Spleen (tissue), 13 donors: ENCODE measurements at regions of chr1 and their contacts with region 1.

Region 1: DNA sequence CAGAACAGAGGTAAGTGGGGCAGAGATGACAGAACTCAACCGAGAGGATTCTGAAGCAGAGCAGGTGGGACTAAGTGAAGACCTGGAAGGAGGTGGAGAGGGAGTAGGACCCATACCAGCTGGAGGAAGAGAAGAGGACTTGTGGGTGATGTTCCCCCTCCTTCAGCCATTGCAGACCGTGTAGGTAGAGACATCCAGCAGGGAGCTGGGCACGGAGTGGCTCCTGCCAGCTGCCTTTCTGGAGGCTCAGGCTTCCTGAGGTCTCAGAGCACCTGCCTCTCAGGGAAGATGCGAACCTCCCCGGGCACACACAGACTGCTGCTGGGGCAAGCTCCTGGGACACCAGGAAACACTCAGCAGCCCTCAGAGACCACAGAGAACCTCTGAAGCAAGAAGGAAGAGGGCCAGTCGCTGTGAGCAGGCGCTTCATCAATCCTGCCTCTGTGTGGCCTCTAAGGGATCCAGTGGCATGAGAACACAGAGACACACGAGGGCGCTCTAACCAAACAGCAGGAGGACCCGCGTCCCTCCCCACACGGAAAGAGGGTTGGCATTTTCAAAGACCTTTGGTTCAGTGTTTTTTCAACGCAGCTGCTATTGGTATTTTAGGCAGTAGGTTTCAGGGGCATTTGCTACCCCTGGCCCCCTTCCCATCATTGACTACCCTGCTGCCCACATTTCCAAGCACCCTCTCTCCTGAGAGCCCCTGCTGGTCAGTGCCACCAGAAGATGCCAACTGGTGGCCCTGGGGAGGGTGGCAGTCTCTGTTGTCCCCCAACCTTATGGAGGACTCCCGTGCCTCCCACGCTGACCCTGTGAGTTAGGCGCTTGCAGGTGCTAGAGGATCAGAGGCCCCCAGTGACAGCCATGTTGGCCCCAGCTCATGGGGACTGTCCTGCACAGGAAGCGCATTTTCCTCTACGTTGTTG is 89.6 kb upstream of the EDN2 start:
- DNase-seq: peak; percentile 91
- H3K4me3 ChIP-seq: peak overlapping the region in 1 of 8 donors; percentile 15
- H3K27ac ChIP-seq: no peak overlapping the region
- H3K4me1 ChIP-seq: peaks cover 0 to 17% (median 13%) of the 10 kb centered on the region in 6 donors
- H3K27me3 ChIP-seq: no peaks in the 10 kb centered on the region
- CTCF ChIP-seq: peak; percentile 82 to 96 (median 91)
- POLR2A ChIP-seq: no peak

Region 2: DNA sequence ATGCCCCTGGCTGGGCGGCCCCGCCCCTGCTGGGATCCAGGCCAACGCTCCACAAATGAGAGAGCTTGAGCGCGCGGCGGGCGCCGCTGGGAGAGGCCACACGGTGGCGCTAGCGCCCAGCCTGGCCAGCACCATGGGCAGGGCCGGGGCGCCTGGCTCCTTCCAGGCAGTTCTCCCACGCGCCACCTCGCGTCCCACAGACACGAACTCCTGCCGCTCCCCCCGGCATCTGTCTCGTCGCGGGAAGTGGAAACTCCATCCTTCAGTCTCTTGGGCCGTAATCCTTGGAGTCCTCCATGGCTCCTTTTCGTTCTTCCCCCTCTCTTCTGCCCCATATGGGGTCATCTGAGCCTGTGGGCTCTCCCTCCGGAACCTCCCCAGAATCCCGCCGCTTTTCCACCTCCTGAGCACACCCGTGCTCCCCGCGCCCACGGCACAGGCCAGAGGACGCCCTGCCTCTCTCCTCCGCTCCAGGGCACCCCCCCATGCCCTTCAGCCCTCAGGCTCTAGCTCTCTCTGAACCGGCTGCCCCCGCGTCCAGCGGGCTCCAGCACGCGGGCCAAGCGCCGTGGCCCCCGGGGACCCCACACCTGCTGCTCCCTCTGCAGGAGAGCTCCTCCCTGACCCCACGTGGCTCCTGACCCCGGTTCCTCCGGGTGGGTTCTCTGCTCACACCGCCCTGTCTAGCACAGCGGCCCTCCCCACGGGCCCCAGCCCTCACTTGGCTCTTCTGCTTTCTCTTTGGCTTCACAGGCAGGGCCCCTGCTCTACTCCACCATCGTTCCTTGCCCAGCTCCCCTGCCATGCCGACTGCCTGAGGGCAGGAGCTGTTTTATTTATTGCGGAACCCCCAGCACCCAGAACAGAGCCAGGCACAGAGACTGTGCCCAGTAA is 57.6 kb before region 1 on chr1:
- intact Hi-C with region 1: no loop called
- DNase-seq: peak; percentile 94
- H3K4me3 ChIP-seq: peak overlapping the region; percentile 1 to 65 (median 32)
- H3K27ac ChIP-seq: no peak overlapping the region
- H3K4me1 ChIP-seq: peaks cover 5 to 22% (median 16%) of the 10 kb centered on the region in 6 donors
- H3K27me3 ChIP-seq: no peaks in the 10 kb centered on the region
- CTCF ChIP-seq: peak; percentile 43 to 96 (median 90)
- POLR2A ChIP-seq: no peak

Region 3: DNA sequence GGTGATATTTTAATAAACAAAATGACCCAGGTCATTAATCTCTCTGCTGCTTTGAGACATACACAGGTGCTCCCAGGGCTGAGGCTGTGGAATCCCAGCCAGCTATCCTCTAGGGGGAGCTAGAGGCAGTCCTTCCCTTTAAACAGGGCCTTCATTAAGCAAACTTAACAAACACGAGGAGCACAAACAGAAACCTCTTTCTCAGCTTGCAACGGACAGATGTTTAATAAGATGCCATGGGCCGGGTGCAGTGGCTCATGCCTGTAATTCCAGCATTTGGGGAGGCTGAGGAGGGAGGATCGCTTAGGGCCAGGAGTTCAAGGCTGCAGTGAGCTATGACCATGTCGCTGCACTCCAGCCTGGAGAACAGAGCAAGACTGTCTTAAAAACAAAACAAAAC is 238.0 kb after region 1 on chr1:
- intact Hi-C with region 1: loop called (anchors 10 kb)
- DNase-seq: no peak
- H3K4me3 ChIP-seq: no peak overlapping the region
- H3K27ac ChIP-seq: peak overlapping the region in 4 of 8 donors; percentile 19 to 37 (median 33)
- H3K4me1 ChIP-seq: peaks cover 6 to 43% (median 14%) of the 10 kb centered on the region in 6 donors
- H3K27me3 ChIP-seq: no peaks in the 10 kb centered on the region
- CTCF ChIP-seq: peak in 9 of 11 experiments; percentile 17 to 76 (median 58)
- POLR2A ChIP-seq: no peak

Region 4: DNA sequence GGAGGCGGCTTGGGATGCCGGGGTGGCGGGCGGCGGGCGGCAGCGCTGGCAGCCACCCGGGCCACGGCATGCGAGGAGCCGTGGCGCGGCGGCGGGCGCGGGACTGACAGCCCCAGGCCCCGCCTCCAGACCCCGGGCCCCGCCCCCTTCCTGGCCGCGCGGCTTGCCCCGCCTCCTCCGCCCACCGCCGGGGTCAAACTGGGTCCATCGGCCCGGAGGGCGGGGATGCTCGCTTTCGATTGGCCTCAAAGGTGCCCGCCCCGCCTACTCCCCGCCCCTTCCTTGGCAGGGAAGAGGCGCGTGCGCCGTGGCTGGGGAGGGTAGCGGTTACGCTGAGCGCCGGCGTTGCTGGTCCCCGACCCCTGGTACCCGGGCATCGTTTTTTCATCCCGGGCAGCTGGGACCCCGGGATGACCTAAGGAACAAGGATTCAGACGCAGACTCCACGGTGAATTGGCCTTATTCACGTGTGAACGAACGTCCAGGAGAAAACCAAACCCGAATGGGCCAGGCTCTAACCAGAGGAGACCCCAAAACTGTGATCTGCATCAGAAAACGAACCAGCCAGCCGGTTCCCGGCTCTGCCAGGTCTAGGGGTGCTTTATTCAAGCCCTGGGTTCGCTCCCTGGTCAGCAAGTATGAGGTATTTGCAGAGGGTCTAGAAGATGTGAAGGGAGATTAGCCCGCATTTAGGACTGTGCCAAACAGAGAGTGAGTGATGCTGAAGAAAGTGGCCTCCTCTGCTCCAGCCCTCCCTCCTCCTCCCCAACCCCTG is 462.0 kb after region 1 on chr1:
- intact Hi-C with region 1: loop called (anchors 10 kb)
- DNase-seq: peak; percentile 99
- H3K4me3 ChIP-seq: peak overlapping the region; percentile 65 to 95 (median 89)
- H3K27ac ChIP-seq: peak overlapping the region in 6 of 8 donors; percentile 70 to 87 (median 78)
- H3K4me1 ChIP-seq: peaks cover 7 to 30% (median 20%) of the 10 kb centered on the region in 6 donors
- H3K27me3 ChIP-seq: no peaks in the 10 kb centered on the region
- CTCF ChIP-seq: peak in 1 of 11 experiments; percentile 16
- POLR2A ChIP-seq: no peak

Region 5: DNA sequence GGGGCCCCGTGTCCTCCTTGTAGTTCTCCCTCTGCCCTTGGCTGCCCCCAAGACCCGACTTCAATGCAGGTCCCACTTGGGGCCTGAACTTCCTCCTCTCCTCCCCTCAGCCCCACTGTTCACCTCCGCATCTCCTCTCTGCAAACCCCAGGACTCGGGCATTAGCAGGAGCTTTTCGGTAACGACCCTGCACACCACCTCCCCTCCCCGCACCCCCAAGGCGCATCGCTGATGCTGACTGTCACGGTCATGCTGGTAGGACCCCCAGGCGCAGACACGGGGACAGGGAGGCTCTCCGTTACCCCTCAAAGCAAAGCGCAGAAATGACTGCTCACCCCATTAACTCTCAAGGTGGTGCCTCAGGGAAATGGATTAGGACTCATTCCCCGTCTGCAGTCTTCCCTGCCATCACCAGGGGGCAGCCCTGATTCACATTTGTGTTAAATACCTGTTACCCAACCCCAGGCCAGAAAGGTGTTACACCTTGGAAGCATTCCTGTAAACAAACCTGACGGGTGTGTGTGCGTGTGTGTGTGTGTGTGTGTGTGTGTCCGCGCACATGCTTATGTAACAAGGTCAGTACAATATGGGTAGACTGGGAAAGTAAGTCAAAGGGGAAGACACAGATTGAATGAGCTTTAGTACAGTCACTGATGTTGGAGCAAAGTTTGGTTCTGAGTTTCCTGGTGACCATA is 572.7 kb after region 1 on chr1:
- intact Hi-C with region 1: loop called (anchors 10 kb)
- DNase-seq: no peak
- H3K4me3 ChIP-seq: no peak overlapping the region
- H3K27ac ChIP-seq: no peak overlapping the region
- H3K4me1 ChIP-seq: peaks cover 0 to 24% (median 8%) of the 10 kb centered on the region in 6 donors
- H3K27me3 ChIP-seq: peaks cover 0 to 52% (median 4%) of the 10 kb centered on the region in 7 donors
- CTCF ChIP-seq: peak; percentile 60 to 92 (median 80)
- POLR2A ChIP-seq: no peak

Region 6: DNA sequence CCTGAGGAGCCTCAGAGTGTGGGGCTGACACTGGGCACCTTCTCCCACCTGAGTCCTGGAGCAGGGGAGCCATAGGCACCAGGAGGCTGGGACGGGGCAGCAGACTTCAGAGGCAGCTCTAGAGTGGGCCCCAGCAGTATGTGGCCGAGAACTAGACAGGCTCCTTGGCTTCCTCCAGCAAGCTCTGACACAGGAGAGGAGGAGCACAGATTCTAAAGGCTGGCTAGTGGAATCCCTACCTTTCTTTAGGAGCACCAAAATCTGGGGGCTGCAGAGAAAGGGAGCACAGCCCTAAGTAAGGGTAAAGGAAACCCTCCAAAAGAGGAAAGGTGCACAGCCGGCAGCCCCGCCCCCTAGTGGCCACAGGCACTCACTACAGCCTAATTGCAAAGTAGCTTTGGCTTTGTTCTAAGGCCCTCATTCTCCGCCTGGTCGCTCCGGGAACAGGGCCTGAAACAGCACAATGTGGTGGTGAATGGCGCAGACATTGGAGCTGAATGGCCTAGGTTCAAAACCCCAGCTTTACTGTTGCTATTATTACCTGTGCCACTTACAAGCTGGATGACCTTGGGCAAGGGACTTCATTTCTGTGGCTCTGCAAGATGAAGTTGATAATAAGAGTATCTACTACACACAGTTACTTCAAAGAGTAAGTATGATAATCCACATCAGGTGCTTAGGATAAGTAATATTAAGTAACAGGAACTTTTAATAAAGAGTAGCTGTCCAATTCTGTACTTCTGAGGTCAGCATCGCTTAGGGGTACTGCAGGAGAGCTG is 599.3 kb after region 1 on chr1:
- intact Hi-C with region 1: loop called (anchors 10 kb)
- DNase-seq: peak; percentile 92
- H3K4me3 ChIP-seq: no peak overlapping the region
- H3K27ac ChIP-seq: peak overlapping the region; percentile 45 to 79 (median 67)
- H3K4me1 ChIP-seq: peaks cover 9 to 53% (median 36%) of the 10 kb centered on the region in 6 donors
- H3K27me3 ChIP-seq: no peaks in the 10 kb centered on the region
- CTCF ChIP-seq: peak; percentile 75 to 97 (median 93)
- POLR2A ChIP-seq: no peak